Activated B cell treated with CpG ODN at 0.5 μM for 24 hours (primary cell): ENCODE measurements at regions of chr22 and their contacts with region 1.

Region 1: DNA sequence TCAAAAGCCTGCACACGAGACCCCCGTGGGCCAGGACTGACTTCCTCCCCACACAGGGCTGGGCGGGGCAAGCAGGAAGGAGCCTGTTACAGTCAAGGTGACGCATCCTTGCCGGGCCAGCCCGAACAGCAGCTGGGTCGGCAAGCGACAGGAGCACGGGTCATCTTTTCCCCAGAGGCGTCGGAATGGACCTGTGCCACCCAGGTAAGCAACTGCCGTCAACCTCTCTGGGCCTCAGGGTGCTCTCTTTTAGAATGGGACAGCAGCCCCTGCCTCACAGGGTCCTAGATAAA is at the start of gene CYTH4:
- DNase-seq: peak; percentile 64
- ATAC-seq: peak; percentile 69
- H3K4me3 Mint-ChIP-seq: peak within 1 kb of the TSS; percentile 86
- H3K27ac Mint-ChIP-seq: peak within 1 kb of the TSS; percentile 99
- H3K4me1 Mint-ChIP-seq: peaks cover 81% of the 10 kb centered on the region
- H3K27me3 Mint-ChIP-seq: no peaks in the 10 kb centered on the region
- CTCF ChIP-seq: no peak
- total RNA-seq, gene CYTH4: 37.2 and 40.3 TPM in 2 replicates

Region 2: GRCh38 chr22:37063431-37064420 is 218.6 kb before region 1 on chr22:
- CTCF ChIA-PET with region 1: no interaction called
- POLR2A ChIA-PET with region 1: no interaction called
- intact Hi-C with region 1: no loop called
- DNase-seq: no peak
- ATAC-seq: no peak
- H3K4me3 Mint-ChIP-seq: no peak overlapping the region
- H3K27ac Mint-ChIP-seq: no peak overlapping the region
- H3K4me1 Mint-ChIP-seq: no peaks in the 10 kb centered on the region
- H3K27me3 Mint-ChIP-seq: peaks cover 9% of the 10 kb centered on the region
- CTCF ChIP-seq: no peak

Region 3: GRCh38 chr22:37218771-37219411 is 63.4 kb before region 1 on chr22:
- CTCF ChIA-PET with region 1: interaction called, 3 read pairs
- POLR2A ChIA-PET with region 1: interaction called, 10 read pairs
- intact Hi-C with region 1: no loop called
- DNase-seq: no peak
- ATAC-seq: peak; percentile 83
- H3K4me3 Mint-ChIP-seq: peak overlapping the region; percentile 71
- H3K27ac Mint-ChIP-seq: peak overlapping the region; percentile 99
- H3K4me1 Mint-ChIP-seq: peaks cover 78% of the 10 kb centered on the region
- H3K27me3 Mint-ChIP-seq: no peaks in the 10 kb centered on the region
- CTCF ChIP-seq: no peak

Region 4: DNA sequence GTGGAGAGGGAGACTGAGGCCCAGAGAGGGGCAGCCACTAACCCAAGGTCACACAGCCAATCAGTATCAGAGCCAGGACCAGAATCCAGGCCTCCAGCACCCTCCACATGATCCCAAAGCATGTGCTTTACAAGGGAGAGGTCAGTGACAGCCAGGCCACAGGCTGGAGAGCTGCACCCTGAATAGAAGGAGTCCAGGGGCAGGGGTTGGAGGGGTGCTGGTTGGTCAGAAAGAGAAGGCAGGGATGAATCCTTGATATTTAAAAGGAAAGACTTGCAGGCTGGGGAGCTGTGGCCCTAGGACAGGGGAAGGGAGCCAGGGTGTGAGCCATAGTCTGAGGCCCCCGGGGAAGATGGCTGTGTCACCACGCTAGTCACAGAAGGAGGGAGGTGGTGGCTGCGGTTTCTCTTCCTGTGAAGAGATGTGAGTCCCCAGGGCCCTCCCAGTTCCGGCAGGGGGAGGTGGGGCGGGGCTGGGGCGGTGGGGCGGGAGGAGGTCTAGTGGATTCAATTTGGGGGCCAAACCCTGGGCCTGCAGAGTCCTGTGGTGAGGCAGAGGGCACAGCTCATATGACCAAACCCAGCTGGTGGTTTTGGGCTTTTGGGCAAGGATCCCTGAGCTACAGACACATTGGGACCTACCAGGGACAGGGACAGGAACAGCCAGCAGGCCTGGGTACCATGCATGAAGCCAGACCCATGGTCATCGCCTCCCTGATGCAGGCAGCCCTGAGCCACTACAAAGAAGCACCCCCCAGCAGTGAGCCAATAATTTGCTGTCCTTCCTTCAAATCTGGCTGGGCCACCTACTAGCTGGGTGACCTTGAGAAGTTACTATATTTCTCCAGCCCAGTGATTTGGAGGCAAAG is 52.3 kb before region 1 on chr22:
- CTCF ChIA-PET with region 1: no interaction called
- POLR2A ChIA-PET with region 1: interaction called, 12 read pairs
- intact Hi-C with region 1: no loop called
- DNase-seq: peak; percentile 70
- ATAC-seq: peak; percentile 82
- H3K4me3 Mint-ChIP-seq: peak overlapping the region; percentile 72
- H3K27ac Mint-ChIP-seq: peak overlapping the region; percentile 99
- H3K4me1 Mint-ChIP-seq: peaks cover 91% of the 10 kb centered on the region
- H3K27me3 Mint-ChIP-seq: no peaks in the 10 kb centered on the region
- CTCF ChIP-seq: no peak

Region 5: GRCh38 chr22:37300551-37301017 is 18.3 kb after region 1 on chr22:
- CTCF ChIA-PET with region 1: interaction called, 7 read pairs
- POLR2A ChIA-PET with region 1: interaction called, 16 read pairs
- intact Hi-C with region 1: no loop called
- DNase-seq: no peak
- ATAC-seq: peak; percentile 73
- H3K4me3 Mint-ChIP-seq: peak overlapping the region; percentile 59
- H3K27ac Mint-ChIP-seq: peak overlapping the region; percentile 90
- H3K4me1 Mint-ChIP-seq: peaks cover 57% of the 10 kb centered on the region
- H3K27me3 Mint-ChIP-seq: no peaks in the 10 kb centered on the region
- CTCF ChIP-seq: no peak